Spleen (tissue), 13 donors: ENCODE measurements at regions of chr17 and their contacts with region 1.

Region 1: DNA sequence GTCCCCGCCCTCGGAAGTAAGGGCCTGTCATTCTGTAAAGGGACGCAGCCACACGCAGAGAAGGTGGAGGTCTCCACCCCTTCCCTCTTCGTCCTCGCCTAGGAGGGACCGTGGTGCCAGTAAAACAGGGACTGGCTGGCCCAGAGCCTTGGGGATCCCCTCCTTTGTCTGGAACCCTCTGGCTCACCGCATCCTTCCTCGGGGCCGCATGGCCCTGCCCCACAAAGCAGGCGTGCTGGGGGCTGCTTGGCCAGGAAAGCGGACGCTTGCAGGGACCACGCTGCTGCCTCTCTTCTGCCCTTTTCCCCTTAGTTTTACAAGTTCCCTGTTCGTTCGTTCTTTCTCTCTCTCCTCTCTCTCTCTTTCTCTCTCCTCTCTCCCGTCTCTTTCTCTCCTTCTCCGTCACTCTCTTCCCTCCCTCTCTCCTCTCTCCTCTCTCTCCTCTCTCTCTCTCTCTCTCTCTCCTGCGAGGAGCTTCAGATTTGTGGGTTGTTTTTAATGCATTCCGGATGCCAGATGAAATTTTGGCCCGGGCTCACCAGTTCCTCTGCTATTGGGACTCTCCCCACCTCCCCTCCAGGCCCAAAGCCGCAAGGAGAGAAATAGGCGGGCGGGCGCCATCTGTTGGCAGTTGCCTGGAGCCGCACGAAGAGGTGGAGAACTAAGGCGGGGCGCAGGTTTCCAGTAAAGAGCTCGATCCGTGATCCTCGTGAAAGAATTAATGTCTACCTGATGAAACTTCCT is 35.1 kb upstream of the CDRT4 start:
- DNase-seq: peak; percentile 95
- H3K4me3 ChIP-seq: peak overlapping the region in 2 of 8 donors; percentile 21 to 26
- H3K27ac ChIP-seq: peak overlapping the region in 7 of 8 donors; percentile 39 to 70 (median 60)
- H3K4me1 ChIP-seq: peaks cover 5 to 21% (median 13%) of the 10 kb centered on the region in 6 donors
- H3K27me3 ChIP-seq: no peaks in the 10 kb centered on the region
- CTCF ChIP-seq: peak; percentile 49 to 86 (median 78)
- POLR2A ChIP-seq: no peak

Region 2: GRCh38 chr17:15260376-15261257 is 241.9 kb before region 1 on chr17:
- intact Hi-C with region 1: loop called (anchors 2 kb)
- DNase-seq: peak; percentile 92
- H3K4me3 ChIP-seq: peak overlapping the region; percentile 35 to 75 (median 49)
- H3K27ac ChIP-seq: peak overlapping the region in 7 of 8 donors; percentile 69 to 90 (median 83)
- H3K4me1 ChIP-seq: peaks cover 21 to 82% (median 62%) of the 10 kb centered on the region in 6 donors
- H3K27me3 ChIP-seq: peaks cover 0 to 91% (median 29%) of the 10 kb centered on the region in 7 donors
- CTCF ChIP-seq: peak; percentile 5 to 90 (median 82)
- POLR2A ChIP-seq: no peak

Region 3: DNA sequence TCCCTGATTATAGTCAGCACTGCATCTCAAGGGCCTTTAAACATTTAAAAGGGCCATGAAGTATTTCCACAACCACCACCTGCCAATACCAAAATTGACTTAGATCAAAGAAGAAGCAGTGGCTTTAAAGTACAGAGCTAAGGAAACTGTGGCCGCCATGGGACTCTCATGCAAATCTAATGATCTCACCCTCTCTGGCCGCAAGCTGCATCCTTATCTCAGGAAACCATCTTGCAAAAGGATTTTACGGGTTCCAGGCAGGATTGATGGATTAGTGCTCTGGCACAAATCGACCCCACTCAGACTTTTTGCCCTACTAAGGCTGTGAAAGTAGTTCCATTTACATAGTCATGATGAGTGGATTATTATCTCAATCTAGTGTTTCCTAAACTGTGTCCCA is 57.7 kb before region 1 on chr17:
- intact Hi-C with region 1: no loop called
- DNase-seq: no peak
- H3K4me3 ChIP-seq: no peak overlapping the region
- H3K27ac ChIP-seq: peak overlapping the region in 2 of 8 donors; percentile 10 to 26
- H3K4me1 ChIP-seq: peaks cover 0 to 15% (median 0%) of the 10 kb centered on the region in 6 donors
- H3K27me3 ChIP-seq: no peaks in the 10 kb centered on the region
- CTCF ChIP-seq: no peak
- POLR2A ChIP-seq: no peak

Region 4: GRCh38 chr17:15662681-15663080 is 160.1 kb after region 1 on chr17:
- intact Hi-C with region 1: no loop called
- DNase-seq: no peak
- H3K4me3 ChIP-seq: no peak overlapping the region
- H3K27ac ChIP-seq: no peak overlapping the region
- H3K4me1 ChIP-seq: peaks cover 0 to 7% (median 0%) of the 10 kb centered on the region in 6 donors
- H3K27me3 ChIP-seq: no peaks in the 10 kb centered on the region
- CTCF ChIP-seq: no peak
- POLR2A ChIP-seq: no peak